ENCODE measurements at regions of chr9 and their contacts with region 1.

Region 1: DNA sequence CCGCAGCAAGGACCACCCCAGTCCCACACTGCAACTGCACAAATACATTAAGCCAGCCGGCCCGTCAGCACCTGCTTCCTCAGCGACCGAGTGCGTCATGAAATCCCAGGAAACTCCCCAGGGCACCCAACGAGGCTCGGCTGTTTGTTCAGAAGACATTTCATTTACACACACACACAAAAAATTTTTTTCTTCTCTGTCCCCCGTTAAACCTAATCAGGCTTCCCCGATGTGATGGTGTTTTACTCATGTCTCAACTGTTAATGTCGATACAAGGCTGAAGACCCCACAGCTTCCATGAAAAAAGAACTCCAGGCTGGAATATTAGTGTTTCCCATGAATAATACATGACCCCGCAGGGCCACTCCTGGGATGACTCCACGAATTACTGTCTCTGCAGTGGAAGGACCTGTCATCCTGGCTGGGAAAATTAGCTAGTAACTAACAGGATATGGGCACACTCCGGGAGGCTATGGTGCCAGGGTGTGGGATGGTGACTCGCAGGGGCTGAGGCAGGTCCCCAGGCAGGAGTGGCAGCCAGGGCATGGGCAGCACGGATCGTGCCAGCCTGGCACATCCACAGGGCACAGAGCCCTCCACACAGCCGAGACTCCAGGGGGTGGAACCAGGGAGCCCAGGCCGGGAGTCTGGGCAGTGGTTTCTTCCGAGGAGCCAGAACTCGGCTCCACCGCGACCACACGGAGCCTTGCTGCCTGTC is 102.4 kb downstream of the VAV2 start:
- DNase-seq: peak; percentile 37
- H3K4me3 ChIP-seq: no peak overlapping the region
- H3K27ac ChIP-seq: no peak overlapping the region
- H3K4me1 ChIP-seq: peaks cover 24% of the 10 kb centered on the region
- H3K27me3 ChIP-seq: no peaks in the 10 kb centered on the region
- CTCF ChIP-seq: no peak

Region 2: GRCh38 chr9:133782157-133783130 is 107.3 kb before region 1 on chr9:
- CTCF ChIA-PET with region 1: no interaction called
- dilution Hi-C with region 1: loop called (anchors 5 kb)
- in situ Hi-C with region 1: no loop called
- intact Hi-C with region 1: no loop called
- DNase-seq: peak; percentile 22
- H3K4me3 ChIP-seq: no peak overlapping the region
- H3K27ac ChIP-seq: no peak overlapping the region
- H3K4me1 ChIP-seq: no peaks in the 10 kb centered on the region
- H3K27me3 ChIP-seq: no peaks in the 10 kb centered on the region
- CTCF ChIP-seq: peak; percentile 80 to 83

Region 3: DNA sequence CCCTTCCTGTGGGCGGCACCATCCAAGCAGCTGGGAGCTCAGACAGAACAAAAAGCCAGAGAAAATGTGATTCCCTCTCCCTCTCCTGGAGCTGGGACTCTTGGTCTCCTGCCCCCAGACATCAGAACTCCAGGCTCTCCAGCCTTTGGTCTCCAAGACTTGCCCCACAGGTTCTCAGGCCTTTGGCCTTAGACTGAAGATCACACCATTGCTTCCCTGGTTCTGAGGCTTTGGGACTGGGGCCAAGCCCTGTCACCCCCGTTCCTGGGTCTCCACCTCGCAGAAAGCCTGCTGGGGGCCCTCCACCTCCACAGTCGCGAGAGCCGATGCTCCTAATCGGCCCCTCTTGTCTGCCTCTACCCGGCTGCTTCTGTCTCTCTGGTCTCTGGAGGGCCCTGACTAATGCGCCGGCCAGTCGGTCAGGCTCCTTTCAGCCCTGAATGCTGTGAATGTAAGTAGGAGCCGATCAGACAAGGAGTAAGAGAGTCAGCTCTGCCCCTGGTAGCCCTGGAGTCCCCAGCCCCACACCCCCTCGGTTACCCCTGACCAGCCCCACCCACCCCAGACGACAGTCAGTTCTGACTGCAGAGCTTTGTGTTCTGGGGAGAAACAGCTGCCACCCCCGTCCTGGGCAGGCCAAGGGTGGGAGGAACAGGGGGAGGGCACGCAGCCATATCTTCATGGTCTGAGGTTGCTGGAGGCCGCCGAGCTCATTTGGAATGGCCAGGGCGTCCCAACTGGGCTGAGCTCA is 44.9 kb after region 1 on chr9:
- CTCF ChIA-PET with region 1: no interaction called
- dilution Hi-C with region 1: loop called (anchors 5 kb)
- in situ Hi-C with region 1: no loop called
- intact Hi-C with region 1: no loop called
- DNase-seq: no peak
- H3K4me3 ChIP-seq: no peak overlapping the region
- H3K27ac ChIP-seq: no peak overlapping the region
- H3K4me1 ChIP-seq: peaks cover 2% of the 10 kb centered on the region
- H3K27me3 ChIP-seq: no peaks in the 10 kb centered on the region
- CTCF ChIP-seq: no peak

Region 4: DNA sequence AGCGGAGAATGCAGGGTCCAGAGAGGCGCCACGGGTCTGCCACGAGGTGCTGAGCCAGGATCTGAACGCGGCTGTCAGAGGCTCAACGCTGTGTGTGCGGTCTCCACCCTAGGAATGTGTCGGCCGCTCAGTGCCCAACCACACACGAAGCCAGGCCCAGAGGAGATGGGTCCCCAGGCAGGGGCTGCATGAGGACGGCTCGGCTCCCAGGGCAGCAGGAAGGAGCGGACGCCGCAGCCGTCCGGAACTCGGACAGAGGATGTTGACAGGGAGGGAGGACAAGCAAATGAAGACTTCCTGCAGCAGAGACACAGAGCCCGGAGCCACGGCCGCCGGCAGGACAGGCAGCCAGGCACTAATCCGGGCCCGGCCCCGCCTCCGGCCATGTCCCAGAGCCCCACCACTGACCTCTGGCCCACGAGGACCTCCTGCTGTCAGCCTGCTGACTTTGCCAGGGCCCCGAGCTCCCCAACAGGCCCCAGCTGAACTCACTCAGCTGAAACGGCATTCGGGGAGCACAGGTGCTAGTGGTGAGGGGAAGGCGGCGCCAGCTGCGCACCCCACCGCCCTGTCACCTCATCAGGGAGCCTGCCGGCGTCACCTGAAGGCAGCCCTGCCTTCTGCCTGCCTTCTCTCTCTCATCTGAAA is 89.7 kb after region 1 on chr9:
- CTCF ChIA-PET with region 1: no interaction called
- dilution Hi-C with region 1: loop called (anchors 5 kb)
- in situ Hi-C with region 1: no loop called
- intact Hi-C with region 1: no loop called
- DNase-seq: no peak
- H3K4me3 ChIP-seq: no peak overlapping the region
- H3K27ac ChIP-seq: no peak overlapping the region
- H3K4me1 ChIP-seq: no peaks in the 10 kb centered on the region
- H3K27me3 ChIP-seq: no peaks in the 10 kb centered on the region
- CTCF ChIP-seq: no peak

Region 5: DNA sequence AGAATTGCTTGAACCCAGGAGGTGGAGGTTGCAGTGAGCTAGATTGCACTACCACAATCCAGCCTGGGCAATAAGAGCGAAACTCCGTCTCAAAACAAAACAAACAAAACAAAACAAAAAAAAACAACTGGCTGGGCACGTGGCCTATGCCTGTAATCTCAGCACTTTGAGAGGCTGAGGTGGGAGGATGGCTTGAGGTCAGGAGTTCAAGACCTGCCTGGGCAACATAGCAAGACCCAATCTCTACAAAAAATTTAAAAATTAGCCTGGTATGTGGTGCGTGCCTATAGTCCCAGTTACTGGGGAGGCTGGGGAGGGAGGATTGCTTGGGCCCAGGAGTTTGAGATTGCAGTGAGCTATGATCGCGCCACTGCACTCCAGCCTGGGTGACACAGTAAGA is 222.8 kb after region 1 on chr9:
- CTCF ChIA-PET with region 1: no interaction called
- dilution Hi-C with region 1: no loop called
- in situ Hi-C with region 1: no loop called
- intact Hi-C with region 1: no loop called
- DNase-seq: no peak
- H3K4me3 ChIP-seq: no peak overlapping the region
- H3K27ac ChIP-seq: no peak overlapping the region
- H3K4me1 ChIP-seq: no peaks in the 10 kb centered on the region
- H3K27me3 ChIP-seq: no peaks in the 10 kb centered on the region
- CTCF ChIP-seq: no peak

Measured in mammary epithelial cell (primary cell).